ENCODE measurements at regions of chr12 and their contacts with region 1.

Region 1: DNA sequence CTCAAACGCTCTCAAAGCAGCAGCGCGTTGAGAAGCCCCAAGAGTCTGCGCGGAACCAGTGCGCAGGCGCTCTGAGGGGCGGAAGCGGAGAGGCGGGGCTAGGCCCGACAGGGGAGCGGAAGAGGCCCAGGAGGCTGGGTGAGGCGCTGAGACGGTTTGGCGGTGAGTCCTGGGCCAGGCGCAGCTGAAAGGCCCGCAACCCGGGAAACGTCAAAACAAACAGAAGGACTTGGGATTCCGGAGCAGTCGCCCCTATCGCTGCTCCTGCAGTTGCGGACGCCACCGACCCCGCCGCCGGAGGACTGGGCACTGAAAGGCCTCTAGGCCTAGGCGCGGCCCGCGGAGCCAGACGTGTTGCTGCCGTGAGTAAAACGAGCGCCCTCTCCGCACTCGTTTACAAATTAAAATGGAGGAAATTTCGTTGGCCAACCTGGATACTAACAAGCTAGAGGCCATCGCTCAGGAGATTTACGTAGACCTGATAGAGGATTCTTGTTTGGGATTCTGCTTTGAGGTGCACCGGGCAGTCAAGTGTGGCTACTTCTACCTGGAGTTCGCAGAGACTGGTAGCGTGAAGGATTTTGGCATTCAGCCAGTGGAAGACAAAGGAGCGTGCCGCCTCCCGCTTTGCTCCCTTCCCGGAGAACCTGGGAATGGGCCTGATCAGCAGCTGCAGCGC is at the start of gene ATXN7L3B:
- DNase-seq: peak; percentile 95
- H3K4me3 Mint-ChIP-seq: peak within 1 kb of the TSS; percentile 97
- H3K27ac Mint-ChIP-seq: peak within 1 kb of the TSS; percentile 100
- H3K4me1 Mint-ChIP-seq: peaks cover 34% of the 10 kb centered on the region
- H3K27me3 Mint-ChIP-seq: no peaks in the 10 kb centered on the region
- CTCF ChIP-seq: no peak
- total RNA-seq, gene ATXN7L3B: 21.1 and 28.2 TPM in 2 replicates

Region 2: DNA sequence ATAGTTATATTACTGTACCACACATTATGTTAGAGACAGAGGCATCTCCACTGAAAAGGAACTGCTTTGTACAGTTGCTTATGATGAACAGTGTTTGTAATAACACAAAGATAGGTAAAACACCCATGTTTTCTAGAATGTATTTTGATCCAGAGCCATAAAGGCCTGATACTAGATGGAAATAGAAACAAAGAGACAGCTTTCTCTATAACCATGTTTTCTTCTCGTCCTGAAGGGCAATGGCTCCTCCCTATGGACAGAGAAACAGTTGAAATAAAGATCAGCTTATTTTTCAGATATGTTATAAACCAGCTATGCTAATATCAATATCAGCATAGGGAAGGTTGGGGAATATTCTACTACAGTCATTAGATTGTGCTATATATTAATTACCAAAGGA is 109.0 kb after region 1 on chr12:
- CTCF ChIA-PET with region 1: interaction called, 7 read pairs
- POLR2A ChIA-PET with region 1: interaction called, 11 read pairs
- intact Hi-C with region 1: loop called (anchors 2 kb)
- DNase-seq: peak; percentile 51
- H3K4me3 Mint-ChIP-seq: no peak overlapping the region
- H3K27ac Mint-ChIP-seq: no peak overlapping the region
- H3K4me1 Mint-ChIP-seq: no peaks in the 10 kb centered on the region
- H3K27me3 Mint-ChIP-seq: no peaks in the 10 kb centered on the region
- CTCF ChIP-seq: peak; percentile 29

Region 3: GRCh38 chr12:74794522-74794921 is 256.7 kb after region 1 on chr12:
- CTCF ChIA-PET with region 1: no interaction called
- POLR2A ChIA-PET with region 1: no interaction called
- intact Hi-C with region 1: no loop called
- DNase-seq: no peak
- H3K4me3 Mint-ChIP-seq: no peak overlapping the region
- H3K27ac Mint-ChIP-seq: no peak overlapping the region
- H3K4me1 Mint-ChIP-seq: peaks cover 11% of the 10 kb centered on the region
- H3K27me3 Mint-ChIP-seq: no peaks in the 10 kb centered on the region
- CTCF ChIP-seq: no peak